Endothelial cell of umbilical vein (primary cell): ENCODE measurements at regions of chr7 and their contacts with region 1.

Region 1: GRCh38 chr7:81298951-81299669 is 380.3 kb upstream of the SEMA3C start:
- DNase-seq: peak; percentile 89
- H3K4me3 ChIP-seq: peak overlapping the region in 1 of 3 experiments; percentile 30
- H3K27ac ChIP-seq: peak overlapping the region; percentile 24
- H3K4me1 ChIP-seq: peaks cover 20% of the 10 kb centered on the region
- H3K27me3 ChIP-seq: no peaks in the 10 kb centered on the region
- CTCF ChIP-seq: no peak
- POLR2A ChIP-seq: no peak

Region 2: DNA sequence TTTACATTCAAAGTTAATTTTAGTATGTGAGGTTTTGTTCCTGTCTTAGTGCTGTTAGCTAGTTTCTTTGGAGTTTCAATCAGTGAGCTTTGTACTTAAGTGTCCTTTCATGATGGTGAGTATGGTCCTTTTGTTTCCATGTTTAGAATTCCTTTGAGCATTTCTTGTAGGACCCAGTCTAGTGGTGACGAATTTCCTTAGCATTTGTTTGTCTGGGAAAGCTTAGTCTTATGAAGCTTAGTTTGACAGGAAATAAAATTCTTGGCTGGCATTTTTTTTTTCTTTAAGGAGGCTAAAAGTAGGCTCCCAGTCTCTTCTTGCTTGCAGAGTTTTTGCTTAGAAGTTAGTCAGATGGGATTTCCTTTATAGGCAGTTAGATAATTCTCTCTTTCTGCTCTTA is 171.1 kb before region 1 on chr7:
- CTCF ChIA-PET with region 1: no interaction called
- POLR2A ChIA-PET with region 1: no interaction called
- dilution Hi-C with region 1: no loop called
- intact Hi-C with region 1: no loop called
- DNase-seq: peak; percentile 10
- H3K4me3 ChIP-seq: no peak overlapping the region
- H3K27ac ChIP-seq: no peak overlapping the region
- H3K4me1 ChIP-seq: no peaks in the 10 kb centered on the region
- H3K27me3 ChIP-seq: no peaks in the 10 kb centered on the region
- CTCF ChIP-seq: no peak
- POLR2A ChIP-seq: no peak

Region 3: DNA sequence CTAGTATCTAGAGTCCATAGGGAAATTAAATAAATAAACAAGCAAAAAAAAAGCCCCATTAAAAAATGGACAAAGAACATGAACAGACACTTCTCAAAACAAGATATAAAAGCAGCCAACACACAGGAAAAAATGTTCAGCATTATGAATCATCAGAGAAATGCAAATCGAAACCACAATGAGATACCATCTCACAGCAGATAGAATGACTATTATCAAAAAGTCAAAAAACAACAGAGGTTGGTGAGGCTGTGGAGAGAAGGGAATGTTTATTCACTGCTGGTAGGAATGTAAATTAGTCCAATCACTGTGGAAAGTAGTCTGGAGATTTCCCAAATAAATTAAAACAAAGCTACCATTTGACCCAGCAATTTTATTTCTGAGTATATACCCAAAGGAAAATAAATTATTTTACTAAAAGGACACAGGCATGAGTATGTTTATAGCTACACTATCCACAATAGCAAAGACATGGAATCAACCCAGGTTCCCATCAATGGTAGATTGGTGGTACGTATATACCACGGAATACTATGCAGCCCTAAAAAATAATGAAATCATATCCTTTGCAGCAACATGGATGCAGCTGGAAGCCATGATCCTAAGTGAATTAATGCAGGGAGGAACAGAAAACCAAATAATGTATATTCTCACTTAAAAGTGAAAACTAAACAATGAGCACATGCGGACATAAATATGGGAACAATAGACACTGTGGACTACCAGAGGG is 13.8 kb before region 1 on chr7:
- CTCF ChIA-PET with region 1: interaction called, 5 read pairs
- POLR2A ChIA-PET with region 1: no interaction called
- dilution Hi-C with region 1: no loop called
- intact Hi-C with region 1: loop called (anchors 1 kb)
- DNase-seq: peak; percentile 45
- H3K4me3 ChIP-seq: no peak overlapping the region
- H3K27ac ChIP-seq: peak overlapping the region; percentile 33
- H3K4me1 ChIP-seq: peaks cover 6% of the 10 kb centered on the region
- H3K27me3 ChIP-seq: no peaks in the 10 kb centered on the region
- CTCF ChIP-seq: no peak
- POLR2A ChIP-seq: no peak

Region 4: GRCh38 chr7:81327468-81328266 is 28.6 kb after region 1 on chr7:
- CTCF ChIA-PET with region 1: interaction called, 7 read pairs
- POLR2A ChIA-PET with region 1: no interaction called
- dilution Hi-C with region 1: no loop called
- intact Hi-C with region 1: loop called (anchors 1 kb)
- DNase-seq: peak; percentile 48
- H3K4me3 ChIP-seq: no peak overlapping the region
- H3K27ac ChIP-seq: peak overlapping the region; percentile 32
- H3K4me1 ChIP-seq: peaks cover 36% of the 10 kb centered on the region
- H3K27me3 ChIP-seq: no peaks in the 10 kb centered on the region
- CTCF ChIP-seq: no peak
- POLR2A ChIP-seq: no peak